ENCODE measurements at regions of chr19 and their contacts with region 1.

Region 1: GRCh38 chr19:18419195-18419698 is at the start of gene SSBP4:
- DNase-seq: peak; percentile 64
- H3K4me3 Mint-ChIP-seq: peak within 1 kb of the TSS; percentile 89
- H3K27ac Mint-ChIP-seq: peak within 1 kb of the TSS; percentile 85
- H3K4me1 Mint-ChIP-seq: peaks cover 84% of the 10 kb centered on the region
- H3K27me3 Mint-ChIP-seq: peaks cover 28% of the 10 kb centered on the region
- total RNA-seq, gene SSBP4: 112 to 123 TPM

Region 2: GRCh38 chr19:18373892-18374629 is 45.2 kb before region 1 on chr19:
- CTCF ChIA-PET with region 1: no interaction called
- POLR2A ChIA-PET with region 1: no interaction called
- DNase-seq: peak; percentile 50
- H3K4me3 Mint-ChIP-seq: no peak overlapping the region
- H3K27ac Mint-ChIP-seq: peak overlapping the region; percentile 73
- H3K4me1 Mint-ChIP-seq: peaks cover 13% of the 10 kb centered on the region
- H3K27me3 Mint-ChIP-seq: no peaks in the 10 kb centered on the region

Region 3: DNA sequence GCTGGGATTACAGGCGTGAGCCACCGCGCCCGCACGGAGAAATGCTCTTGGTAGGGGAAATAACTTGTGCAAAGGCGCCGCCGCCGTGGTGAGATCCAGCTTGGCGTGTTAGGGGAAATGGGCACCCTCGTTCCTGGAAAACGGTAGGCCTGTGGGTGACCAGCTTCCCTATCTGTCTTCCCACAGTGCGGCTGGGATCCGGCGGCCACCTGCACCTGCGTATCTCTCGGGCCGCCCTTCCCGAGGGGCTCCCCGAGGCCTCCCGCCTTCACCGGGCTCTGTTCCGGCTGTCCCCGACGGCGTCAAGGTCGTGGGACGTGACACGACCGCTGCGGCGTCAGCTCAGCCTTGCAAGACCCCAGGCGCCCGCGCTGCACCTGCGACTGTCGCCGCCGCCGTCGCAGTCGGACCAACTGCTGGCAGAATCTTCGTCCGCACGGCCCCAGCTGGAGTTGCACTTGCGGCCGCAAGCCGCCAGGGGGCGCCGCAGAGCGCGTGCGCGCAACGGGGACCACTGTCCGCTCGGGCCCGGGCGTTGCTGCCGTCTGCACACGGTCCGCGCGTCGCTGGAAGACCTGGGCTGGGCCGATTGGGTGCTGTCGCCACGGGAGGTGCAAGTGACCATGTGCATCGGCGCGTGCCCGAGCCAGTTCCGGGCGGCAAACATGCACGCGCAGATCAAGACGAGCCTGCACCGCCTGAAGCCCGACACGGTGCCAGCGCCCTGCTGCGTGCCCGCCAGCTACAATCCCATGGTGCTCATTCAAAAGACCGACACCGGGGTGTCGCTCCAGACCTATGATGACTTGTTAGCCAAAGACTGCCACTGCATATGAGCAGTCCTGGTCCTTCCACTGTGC is 30.9 kb before region 1 on chr19:
- CTCF ChIA-PET with region 1: interaction called, 22 read pairs
- POLR2A ChIA-PET with region 1: no interaction called
- DNase-seq: peak; percentile 75
- H3K4me3 Mint-ChIP-seq: peak overlapping the region; percentile 64
- H3K27ac Mint-ChIP-seq: no peak overlapping the region
- H3K4me1 Mint-ChIP-seq: peaks cover 15% of the 10 kb centered on the region
- H3K27me3 Mint-ChIP-seq: peaks cover 65% of the 10 kb centered on the region

Region 4: DNA sequence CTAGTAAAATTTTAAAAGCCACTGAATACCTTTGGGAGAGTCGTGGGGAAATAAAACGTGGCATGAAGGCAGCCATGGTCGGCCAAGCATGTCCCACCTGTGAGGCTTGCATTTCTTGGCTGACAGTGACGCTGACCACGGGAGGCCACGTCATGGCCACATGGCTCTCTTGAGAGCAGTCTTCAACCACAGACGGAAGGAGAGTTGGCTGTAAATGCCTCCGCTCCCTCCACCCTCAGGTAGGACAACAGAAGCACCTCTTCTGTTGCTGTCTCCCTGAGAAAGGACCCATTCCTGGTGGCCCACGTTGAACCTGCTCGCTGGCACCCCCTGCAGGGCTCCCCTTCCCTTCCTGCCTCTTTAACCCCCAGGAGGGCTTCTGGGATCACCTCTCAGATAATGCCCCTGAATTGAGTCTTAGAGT is 11.2 kb before region 1 on chr19:
- CTCF ChIA-PET with region 1: interaction called, 14 read pairs
- POLR2A ChIA-PET with region 1: no interaction called
- DNase-seq: peak; percentile 33
- H3K4me3 Mint-ChIP-seq: no peak overlapping the region
- H3K27ac Mint-ChIP-seq: no peak overlapping the region
- H3K4me1 Mint-ChIP-seq: peaks cover 5% of the 10 kb centered on the region
- H3K27me3 Mint-ChIP-seq: peaks cover 16% of the 10 kb centered on the region